Spleen (tissue), 13 donors: ENCODE measurements at regions of chr6 and their contacts with region 1.

Region 1: DNA sequence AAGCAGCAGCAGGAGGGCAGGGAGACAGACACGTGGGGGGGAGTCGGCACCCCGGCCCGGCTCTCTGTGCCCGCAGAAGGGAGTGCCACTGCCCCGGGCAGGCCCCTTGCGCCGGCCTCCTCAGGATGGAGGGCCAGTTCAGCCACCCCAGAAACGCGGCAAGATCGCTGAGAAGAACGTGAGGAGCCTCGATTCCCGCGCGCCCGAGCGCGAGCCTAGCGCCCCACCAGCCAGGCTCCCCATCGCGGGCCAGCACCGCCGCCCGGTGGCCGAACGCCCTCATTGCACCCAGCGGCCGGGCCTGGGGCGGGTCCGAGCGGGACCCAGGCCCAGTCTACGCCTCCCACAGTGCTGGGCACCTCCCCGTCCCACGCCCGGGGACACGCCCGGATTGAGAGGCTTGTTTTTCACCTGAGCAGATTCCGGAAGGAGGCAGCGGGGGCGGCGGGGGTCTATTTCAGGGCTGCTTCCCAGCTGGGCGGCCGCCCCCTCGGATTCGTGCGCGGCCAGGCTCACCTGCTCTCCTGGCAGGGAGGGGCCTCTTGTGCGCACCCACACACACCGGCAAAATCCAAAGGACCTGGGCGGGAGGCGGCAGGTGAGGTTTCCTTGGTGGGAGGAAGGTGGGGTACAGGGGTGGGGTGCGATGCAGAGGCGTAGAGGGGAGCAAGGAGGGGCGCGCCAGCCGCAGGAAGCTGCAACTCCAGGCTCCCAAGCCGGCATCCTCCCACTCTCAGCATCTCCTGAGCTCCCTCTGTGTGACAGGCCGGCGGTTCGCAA is 9.0 kb upstream of the GRM4 start:
- DNase-seq: peak; percentile 85
- H3K4me3 ChIP-seq: peak overlapping the region in 2 of 8 donors; percentile 9 to 55
- H3K27ac ChIP-seq: no peak overlapping the region
- H3K4me1 ChIP-seq: peaks cover 0 to 15% (median 11%) of the 10 kb centered on the region in 6 donors
- H3K27me3 ChIP-seq: peaks cover 4 to 66% (median 49%) of the 10 kb centered on the region in 7 donors
- CTCF ChIP-seq: peak; percentile 75 to 94 (median 93)
- POLR2A ChIP-seq: no peak

Region 2: GRCh38 chr6:33771146-33772081 is 383.4 kb before region 1 on chr6:
- intact Hi-C with region 1: loop called (anchors 5 kb)
- DNase-seq: peak; percentile 92
- H3K4me3 ChIP-seq: no peak overlapping the region
- H3K27ac ChIP-seq: peak overlapping the region in 7 of 8 donors; percentile 61 to 71 (median 64)
- H3K4me1 ChIP-seq: peaks cover 3 to 47% (median 24%) of the 10 kb centered on the region in 6 donors
- H3K27me3 ChIP-seq: peaks cover 0 to 27% (median 0%) of the 10 kb centered on the region in 7 donors
- CTCF ChIP-seq: peak; percentile 72 to 99 (median 95)
- POLR2A ChIP-seq: peak in 1 of 3 donors; percentile 19

Region 3: DNA sequence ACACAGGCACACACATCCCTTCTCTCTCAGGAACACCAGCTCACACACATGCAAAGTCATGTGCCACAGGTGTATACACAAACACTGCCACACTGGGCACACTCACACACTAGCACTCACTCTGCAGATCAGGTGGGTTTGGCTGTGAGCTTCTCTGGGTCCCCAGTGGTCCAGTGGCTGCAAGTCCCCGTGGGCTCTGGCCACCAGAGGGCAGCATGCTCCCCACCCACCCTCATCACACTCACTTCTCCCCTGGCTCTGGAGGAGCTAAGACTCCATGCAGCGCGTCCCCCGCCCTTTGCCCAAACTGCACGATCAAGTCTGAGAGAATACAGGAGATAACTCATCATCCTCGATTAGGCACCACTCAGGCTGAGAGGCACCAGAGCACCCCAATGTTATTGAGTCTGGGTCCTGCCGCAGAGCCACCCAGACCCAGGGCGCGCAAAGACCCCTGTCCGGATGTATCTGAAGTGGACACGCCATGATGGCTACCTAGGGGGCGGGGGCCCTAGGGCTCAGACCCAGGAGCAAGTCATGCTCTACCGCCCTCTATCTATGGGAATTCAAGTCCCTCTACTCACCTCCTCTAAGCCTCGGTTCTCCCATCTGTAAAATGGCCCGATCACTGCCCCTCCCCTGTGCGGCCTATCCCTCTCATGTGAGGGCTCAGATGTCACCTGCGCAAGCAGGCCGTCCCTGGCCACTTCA is 99.5 kb before region 1 on chr6:
- intact Hi-C with region 1: loop called (anchors 5 kb)
- DNase-seq: peak; percentile 86
- H3K4me3 ChIP-seq: no peak overlapping the region
- H3K27ac ChIP-seq: no peak overlapping the region
- H3K4me1 ChIP-seq: peaks cover 0 to 6% (median 0%) of the 10 kb centered on the region in 6 donors
- H3K27me3 ChIP-seq: peaks cover 0 to 26% (median 0%) of the 10 kb centered on the region in 7 donors
- CTCF ChIP-seq: peak; percentile 42 to 87 (median 75)
- POLR2A ChIP-seq: no peak

Region 4: GRCh38 chr6:34132486-34133185 is 22.2 kb before region 1 on chr6:
- intact Hi-C with region 1: no loop called
- DNase-seq: no peak
- H3K4me3 ChIP-seq: no peak overlapping the region
- H3K27ac ChIP-seq: no peak overlapping the region
- H3K4me1 ChIP-seq: no peaks in the 10 kb centered on the region
- H3K27me3 ChIP-seq: peaks cover 0 to 87% (median 7%) of the 10 kb centered on the region in 7 donors
- CTCF ChIP-seq: no peak
- POLR2A ChIP-seq: no peak